ENCODE measurements at regions of chr5 and their contacts with region 1.

Region 1: DNA sequence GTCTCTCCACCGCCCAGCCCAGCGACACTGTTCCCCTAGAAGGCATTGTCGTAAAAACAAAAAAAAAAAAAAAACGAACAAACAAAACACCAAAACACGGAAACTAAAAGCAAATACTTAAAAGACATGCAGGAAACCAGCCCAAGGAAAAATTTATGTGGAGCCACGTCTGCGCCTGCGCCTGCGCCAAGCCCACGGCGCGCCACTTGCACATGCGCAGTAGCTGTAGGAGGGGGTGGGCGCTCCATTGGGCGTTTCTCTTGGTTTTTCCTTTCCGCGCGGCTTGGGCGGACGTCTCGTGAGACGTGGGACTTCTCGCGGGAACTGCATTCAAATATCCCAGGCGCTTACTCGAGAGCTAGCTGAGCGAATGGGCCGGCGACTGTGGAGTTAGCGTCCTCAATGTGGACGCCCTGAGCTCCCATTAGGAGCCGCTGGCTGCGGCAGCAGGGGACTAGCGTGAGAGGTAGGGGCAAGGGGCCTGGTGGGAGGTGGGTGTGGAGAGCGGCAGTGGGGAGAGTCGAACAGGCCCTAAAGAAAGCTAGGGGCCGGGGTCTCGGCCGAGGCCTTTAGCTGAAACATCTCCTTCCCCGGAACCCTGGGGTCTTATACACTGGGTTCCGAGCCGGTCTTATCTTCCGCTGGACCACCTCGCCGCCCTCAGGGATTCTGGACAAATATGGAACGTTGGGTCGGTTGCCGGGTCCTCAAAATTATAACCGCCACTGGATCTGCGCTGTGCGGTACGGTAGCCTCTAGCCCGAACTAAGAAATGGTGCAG is at the start of gene SPDL1:
- DNase-seq: peak; percentile 98
- H3K4me3 ChIP-seq: peak within 1 kb of the TSS; percentile 48 to 96 (median 92)
- H3K27ac ChIP-seq: peak within 1 kb of the TSS; percentile 52
- H3K4me1 ChIP-seq: peaks cover 24% of the 10 kb centered on the region
- H3K27me3 ChIP-seq: peaks cover 0 to 4% of the 10 kb centered on the region in 2 experiments
- CTCF ChIP-seq: no peak
- POLR2A ChIP-seq: peak; percentile 92
- total RNA-seq, gene SPDL1: 46.8 and 51.8 TPM in 2 replicates

Region 2: DNA sequence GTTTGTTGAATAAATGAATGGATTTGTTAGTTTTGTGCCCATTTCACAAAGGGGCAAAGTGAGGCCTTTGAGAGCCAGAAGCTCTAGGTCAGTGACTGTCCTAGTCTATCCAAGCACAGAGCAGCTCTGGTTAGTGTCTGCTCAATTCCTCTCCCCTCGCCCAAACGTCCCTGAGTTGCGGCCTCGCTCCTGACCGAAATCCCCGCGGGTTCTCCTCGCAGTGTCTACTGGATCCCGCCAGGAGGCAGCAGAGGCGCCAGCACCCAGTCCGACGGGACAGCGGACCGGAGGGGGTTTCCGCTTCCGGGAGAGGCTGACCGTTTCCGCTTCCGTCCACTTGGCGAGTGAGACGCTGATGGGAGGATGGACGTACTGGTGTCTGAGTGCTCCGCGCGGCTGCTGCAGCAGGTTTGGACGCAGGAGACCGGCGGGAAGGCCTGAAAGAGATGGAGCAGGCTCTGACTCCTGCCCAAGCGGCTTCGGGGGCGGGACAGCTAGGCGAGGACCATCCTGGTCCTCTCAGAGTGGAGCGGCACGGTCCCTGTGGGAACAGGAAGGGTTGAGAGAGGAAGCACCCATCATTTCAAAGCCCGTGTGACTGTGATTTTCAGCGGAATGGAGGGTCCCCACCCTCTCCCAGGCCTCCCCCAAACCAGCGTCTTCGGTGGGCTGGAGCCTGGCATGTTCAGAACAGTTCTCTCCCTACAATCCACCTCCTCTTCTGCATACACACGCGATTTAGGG is 1097.3 kb before region 1 on chr5 and contains the start of gene RARS1:
- CTCF ChIA-PET with region 1: no interaction called
- POLR2A ChIA-PET with region 1: no interaction called
- dilution Hi-C with region 1: no loop called
- intact Hi-C with region 1: loop called (anchors 10 kb)
- DNase-seq: peak; percentile 94
- H3K4me3 ChIP-seq: peak within 1 kb of the TSS; percentile 62 to 98 (median 82)
- H3K27ac ChIP-seq: peak within 1 kb of the TSS; percentile 4
- H3K4me1 ChIP-seq: peaks cover 6% of the 10 kb centered on the region
- H3K27me3 ChIP-seq: no peaks in the 10 kb centered on the region
- CTCF ChIP-seq: peak; percentile 97 to 98
- POLR2A ChIP-seq: peak; percentile 94
- total RNA-seq, gene RARS1: 90.4 and 104 TPM in 2 replicates

Region 3: GRCh38 chr5:168822745-168823281 is 760.8 kb before region 1 on chr5:
- CTCF ChIA-PET with region 1: no interaction called
- POLR2A ChIA-PET with region 1: no interaction called
- dilution Hi-C with region 1: no loop called
- intact Hi-C with region 1: no loop called
- DNase-seq: no peak
- H3K4me3 ChIP-seq: no peak overlapping the region
- H3K27ac ChIP-seq: no peak overlapping the region
- H3K4me1 ChIP-seq: no peaks in the 10 kb centered on the region
- H3K27me3 ChIP-seq: no peaks in the 10 kb centered on the region
- CTCF ChIP-seq: no peak
- POLR2A ChIP-seq: no peak

Region 4: GRCh38 chr5:168947212-168947868 is 636.3 kb before region 1 on chr5:
- CTCF ChIA-PET with region 1: interaction called, 8 read pairs
- POLR2A ChIA-PET with region 1: no interaction called
- dilution Hi-C with region 1: no loop called
- intact Hi-C with region 1: loop called (anchors 1 kb)
- DNase-seq: peak; percentile 24
- H3K4me3 ChIP-seq: no peak overlapping the region
- H3K27ac ChIP-seq: no peak overlapping the region
- H3K4me1 ChIP-seq: no peaks in the 10 kb centered on the region
- H3K27me3 ChIP-seq: no peaks in the 10 kb centered on the region
- CTCF ChIP-seq: peak; percentile 66 to 75
- POLR2A ChIP-seq: no peak

Region 5: GRCh38 chr5:169161022-169161680 is 422.5 kb before region 1 on chr5:
- CTCF ChIA-PET with region 1: no interaction called
- POLR2A ChIA-PET with region 1: no interaction called
- dilution Hi-C with region 1: no loop called
- intact Hi-C with region 1: loop called (anchors 5 kb)
- DNase-seq: peak; percentile 53
- H3K4me3 ChIP-seq: no peak overlapping the region
- H3K27ac ChIP-seq: peak overlapping the region; percentile 51
- H3K4me1 ChIP-seq: peaks cover 35% of the 10 kb centered on the region
- H3K27me3 ChIP-seq: no peaks in the 10 kb centered on the region
- CTCF ChIP-seq: no peak
- POLR2A ChIP-seq: no peak

Region 6: GRCh38 chr5:169350759-169351240 is 232.8 kb before region 1 on chr5:
- CTCF ChIA-PET with region 1: no interaction called
- POLR2A ChIA-PET with region 1: no interaction called
- dilution Hi-C with region 1: no loop called
- intact Hi-C with region 1: loop called (anchors 2 kb)
- DNase-seq: peak; percentile 94
- H3K4me3 ChIP-seq: no peak overlapping the region
- H3K27ac ChIP-seq: peak overlapping the region; percentile 74
- H3K4me1 ChIP-seq: peaks cover 57% of the 10 kb centered on the region
- H3K27me3 ChIP-seq: no peaks in the 10 kb centered on the region
- CTCF ChIP-seq: peak in 1 of 2 donors; percentile 1
- POLR2A ChIP-seq: no peak

Region 7: GRCh38 chr5:170070556-170071412 is 487.2 kb after region 1 on chr5:
- CTCF ChIA-PET with region 1: interaction called, 11 read pairs
- POLR2A ChIA-PET with region 1: no interaction called
- dilution Hi-C with region 1: no loop called
- intact Hi-C with region 1: no loop called
- DNase-seq: peak; percentile 56
- H3K4me3 ChIP-seq: no peak overlapping the region
- H3K27ac ChIP-seq: no peak overlapping the region
- H3K4me1 ChIP-seq: peaks cover 11% of the 10 kb centered on the region
- H3K27me3 ChIP-seq: no peaks in the 10 kb centered on the region
- CTCF ChIP-seq: peak; percentile 62 to 91
- POLR2A ChIP-seq: no peak

Measured in endothelial cell of umbilical vein (primary cell).